Right ventricle myocardium inferior (tissue), 1 donor: ENCODE measurements at regions of chr16 and their contacts with region 1.

Region 1: GRCh38 chr16:67393035-67393787 is at the start of gene TPPP3:
- DNase-seq: peak; percentile 96
- ATAC-seq: peak; percentile 87
- total RNA-seq, gene TPPP3: 9.5 TPM

Region 2: GRCh38 chr16:66947302-66948065 is 445.7 kb before region 1 on chr16:
- intact Hi-C with region 1: loop called (anchors 10 kb)
- DNase-seq: peak; percentile 80
- ATAC-seq: peak; percentile 74

Region 3: DNA sequence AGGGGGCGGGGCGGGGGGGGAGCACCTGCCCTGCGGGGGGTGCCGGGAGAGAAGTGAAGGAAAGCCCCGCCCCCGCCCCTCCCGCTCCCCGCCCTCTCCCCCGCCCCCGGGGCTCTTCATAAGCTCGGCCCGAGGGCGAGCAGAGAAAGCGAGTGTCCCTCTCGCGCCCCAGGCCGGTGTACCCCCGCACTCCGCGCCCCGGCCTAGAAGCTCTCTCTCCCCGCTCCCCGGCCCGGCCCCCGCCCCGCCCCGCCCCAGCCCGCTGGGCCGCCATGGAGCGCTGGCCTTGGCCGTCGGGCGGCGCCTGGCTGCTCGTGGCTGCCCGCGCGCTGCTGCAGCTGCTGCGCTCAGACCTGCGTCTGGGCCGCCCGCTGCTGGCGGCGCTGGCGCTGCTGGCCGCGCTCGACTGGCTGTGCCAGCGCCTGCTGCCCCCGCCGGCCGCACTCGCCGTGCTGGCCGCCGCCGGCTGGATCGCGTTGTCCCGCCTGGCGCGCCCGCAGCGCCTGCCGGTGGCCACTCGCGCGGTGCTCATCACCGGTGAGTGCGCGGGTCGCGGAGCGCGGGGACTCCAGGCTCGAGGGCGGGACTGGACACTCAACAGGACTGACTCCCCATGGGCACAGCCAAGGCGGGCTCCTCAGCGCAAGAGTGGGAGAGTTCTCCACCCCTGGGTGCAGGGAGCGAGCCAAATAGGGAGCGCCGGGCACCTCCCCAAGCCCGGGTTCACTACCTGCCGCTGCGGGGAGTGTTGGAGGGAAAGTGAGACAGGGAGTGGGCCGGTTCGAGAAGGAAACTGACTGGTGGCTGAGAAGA is 38.0 kb after region 1 on chr16 and contains the start of gene HSD11B2:
- intact Hi-C with region 1: no loop called
- DNase-seq: peak; percentile 79
- ATAC-seq: peak; percentile 53
- total RNA-seq, gene HSD11B2: 0.81 TPM

Region 4: GRCh38 chr16:67790071-67790470 is 396.9 kb after region 1 on chr16:
- intact Hi-C with region 1: no loop called
- DNase-seq: no peak
- ATAC-seq: no peak